Right cardiac atrium (tissue), 5 donors: ENCODE measurements at regions of chr10 and their contacts with region 1.

Region 1: DNA sequence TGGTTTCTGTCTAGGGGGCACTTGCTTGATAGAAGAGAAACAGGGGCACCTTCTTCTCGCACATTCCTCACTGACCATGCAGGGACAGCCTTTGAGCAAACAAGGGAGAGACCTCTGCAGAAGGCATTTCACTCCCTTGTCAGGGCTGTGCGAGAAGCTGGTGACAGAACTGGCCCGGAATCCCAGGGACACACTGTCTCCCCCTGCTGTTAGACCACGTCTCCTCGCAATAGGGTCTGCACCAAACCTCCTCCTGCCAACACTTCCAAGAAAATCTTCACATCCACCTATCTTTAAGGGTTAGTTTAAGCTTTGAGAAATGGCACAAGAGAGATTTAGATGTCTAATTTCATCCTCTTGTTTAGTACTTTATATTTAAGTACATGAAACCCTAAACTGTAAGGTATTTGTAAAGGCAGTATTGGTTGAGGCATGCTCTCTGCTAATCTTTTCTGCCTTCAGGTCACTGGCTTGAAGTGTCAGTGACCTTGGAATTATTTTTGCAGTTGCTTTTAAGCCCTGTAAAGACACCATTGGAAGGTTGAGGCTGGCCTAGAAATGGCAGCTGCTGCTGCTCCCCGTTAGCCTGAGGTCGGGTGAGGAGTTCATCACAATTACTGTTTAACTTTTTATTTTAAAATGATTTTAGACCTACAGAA is 37.0 kb downstream of the RBM20 start:
- DNase-seq: peak in 1 of 3 donors; percentile 44
- ATAC-seq: peak; percentile 53 to 59
- H3K4me3 ChIP-seq: no peak overlapping the region
- H3K27ac ChIP-seq: peak overlapping the region; percentile 89
- H3K4me1 ChIP-seq: peaks cover 3% of the 10 kb centered on the region
- H3K27me3 ChIP-seq: no peaks in the 10 kb centered on the region

Region 2: DNA sequence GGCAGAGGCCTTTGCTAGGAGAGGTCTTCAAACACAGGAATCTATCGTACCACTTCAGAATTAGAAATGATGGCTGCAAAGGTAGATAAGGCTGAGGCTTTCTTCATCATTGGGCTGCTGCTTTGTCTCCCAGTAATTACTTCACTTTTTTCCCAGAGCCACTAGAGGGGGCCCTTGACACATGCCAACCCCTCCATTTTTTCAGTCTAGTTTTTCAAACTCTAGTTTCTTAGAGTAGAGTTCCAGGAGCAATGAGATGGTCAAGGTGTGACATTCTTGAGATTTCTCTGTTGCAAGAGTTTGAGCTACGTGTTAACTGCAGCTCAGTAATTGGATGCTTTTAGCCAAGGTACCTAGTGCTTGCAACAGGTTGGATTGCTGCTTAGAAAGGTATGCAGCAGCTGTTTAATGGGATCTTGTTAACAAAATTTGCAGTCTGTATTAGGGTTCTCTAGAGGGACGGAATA is 70.8 kb before region 1 on chr10:
- intact Hi-C with region 1: loop called in 1 of 4 experiments (anchors 5 kb)
- DNase-seq: no peak
- ATAC-seq: peak; percentile 40 to 46
- H3K4me3 ChIP-seq: no peak overlapping the region
- H3K27ac ChIP-seq: no peak overlapping the region
- H3K4me1 ChIP-seq: no peaks in the 10 kb centered on the region
- H3K27me3 ChIP-seq: no peaks in the 10 kb centered on the region